A673 (cell line): ENCODE measurements at regions of chr10 and their contacts with region 1.

Region 1: GRCh38 chr10:101762736-101763135 is 13.2 kb downstream of the FGF8 start:
- DNase-seq: no peak
- H3K4me3 ChIP-seq: no peak overlapping the region
- H3K27ac ChIP-seq: no peak overlapping the region
- H3K4me1 ChIP-seq: no peaks in the 10 kb centered on the region
- H3K27me3 ChIP-seq: no peaks in the 10 kb centered on the region
- CTCF ChIP-seq: no peak

Region 2: DNA sequence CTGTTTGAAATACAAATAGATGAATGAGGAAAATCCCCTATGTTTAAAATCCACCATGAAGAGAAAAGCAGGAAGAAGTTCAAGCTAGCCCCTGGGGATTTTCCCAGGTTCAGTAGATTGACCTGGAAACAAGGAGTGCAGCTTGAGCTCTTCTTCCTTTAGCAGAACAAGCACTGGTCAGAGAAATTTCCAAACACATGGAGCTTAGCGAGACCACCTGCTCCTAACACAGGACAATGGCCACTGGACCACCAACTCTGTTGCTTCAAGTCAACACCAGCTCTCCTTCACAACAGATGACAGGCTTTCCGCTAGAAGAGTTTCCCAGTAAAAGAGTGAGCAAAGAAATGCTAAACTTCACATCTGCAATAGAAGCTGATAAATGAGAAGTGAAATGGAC is 58.4 kb before region 1 on chr10:
- CTCF ChIA-PET with region 1: no interaction called
- POLR2A ChIA-PET with region 1: interaction called, 14 read pairs
- intact Hi-C with region 1: no loop called
- DNase-seq: no peak
- H3K4me3 ChIP-seq: no peak overlapping the region
- H3K27ac ChIP-seq: no peak overlapping the region
- H3K4me1 ChIP-seq: no peaks in the 10 kb centered on the region
- H3K27me3 ChIP-seq: peaks cover 3% of the 10 kb centered on the region
- CTCF ChIP-seq: no peak